Transverse colon (tissue), 4 donors: ENCODE measurements at regions of chr17 and their contacts with region 1.

Region 1: GRCh38 chr17:22233382-22233781 is 541.1 kb downstream of the KCNJ18 start:
- DNase-seq: no peak
- H3K4me3 ChIP-seq: no peak overlapping the region
- H3K27ac ChIP-seq: no peak overlapping the region
- H3K4me1 ChIP-seq: no peaks in the 10 kb centered on the region
- H3K27me3 ChIP-seq: no peaks in the 10 kb centered on the region
- CTCF ChIP-seq: no peak
- EP300 ChIP-seq: no peak
- POLR2A ChIP-seq: no peak

Region 2: GRCh38 chr17:22145605-22146178 is 87.7 kb before region 1 on chr17:
- in situ Hi-C with region 1: no loop called
- intact Hi-C with region 1: no loop called
- DNase-seq: no peak
- H3K4me3 ChIP-seq: no peak overlapping the region
- H3K27ac ChIP-seq: no peak overlapping the region
- H3K4me1 ChIP-seq: no peaks in the 10 kb centered on the region
- H3K27me3 ChIP-seq: no peaks in the 10 kb centered on the region
- CTCF ChIP-seq: no peak
- EP300 ChIP-seq: no peak
- POLR2A ChIP-seq: no peak

Region 3: DNA sequence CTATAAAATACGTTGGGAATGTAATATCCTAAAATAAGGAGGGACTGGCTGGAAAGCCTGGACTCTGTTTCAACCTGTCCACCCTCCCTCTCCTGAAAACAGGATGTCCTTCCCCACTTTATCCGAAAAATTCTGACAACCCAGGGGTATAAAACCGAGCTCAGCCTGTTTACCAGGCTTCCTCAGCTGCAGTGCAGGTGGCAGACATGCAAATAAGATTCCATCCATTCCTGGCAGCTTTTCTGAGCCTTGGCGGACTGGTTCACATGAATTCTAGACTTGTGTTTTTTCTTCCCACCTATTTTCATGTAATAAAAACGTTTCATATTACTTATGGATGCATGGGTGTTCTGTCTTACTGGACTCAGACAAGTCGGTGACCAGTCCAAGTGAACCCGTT is 61.8 kb before region 1 on chr17:
- in situ Hi-C with region 1: loop called in 1 of 4 experiments (anchors 10 kb)
- intact Hi-C with region 1: no loop called
- DNase-seq: no peak
- H3K4me3 ChIP-seq: no peak overlapping the region
- H3K27ac ChIP-seq: no peak overlapping the region
- H3K4me1 ChIP-seq: no peaks in the 10 kb centered on the region
- H3K27me3 ChIP-seq: no peaks in the 10 kb centered on the region
- CTCF ChIP-seq: no peak
- EP300 ChIP-seq: no peak
- POLR2A ChIP-seq: no peak

Region 4: DNA sequence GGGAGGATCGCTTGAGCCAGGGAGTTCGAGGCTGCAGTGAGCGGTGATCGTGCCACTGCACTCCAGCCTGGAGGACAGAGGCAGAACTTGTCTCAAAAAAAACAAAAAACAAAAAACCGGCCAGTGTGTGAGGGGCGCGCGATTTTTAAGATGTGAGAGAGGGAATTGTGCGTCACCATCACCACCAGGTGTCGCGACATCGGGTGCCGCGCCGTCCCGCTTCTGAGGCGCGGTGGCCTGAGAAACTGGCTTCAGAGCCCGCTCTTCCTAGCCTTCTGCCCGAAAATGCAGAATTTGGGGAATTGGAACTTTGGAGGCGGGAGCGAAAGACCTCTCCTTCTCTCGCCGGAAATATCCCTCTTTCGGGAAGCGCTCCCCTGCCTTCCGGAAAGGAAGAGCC is 16.2 kb before region 1 on chr17:
- in situ Hi-C with region 1: no loop called
- intact Hi-C with region 1: no loop called
- DNase-seq: no peak
- H3K4me3 ChIP-seq: no peak overlapping the region
- H3K27ac ChIP-seq: no peak overlapping the region
- H3K4me1 ChIP-seq: no peaks in the 10 kb centered on the region
- H3K27me3 ChIP-seq: no peaks in the 10 kb centered on the region
- CTCF ChIP-seq: no peak
- EP300 ChIP-seq: no peak
- POLR2A ChIP-seq: no peak

Region 5: GRCh38 chr17:22374741-22375140 is 141.4 kb after region 1 on chr17:
- in situ Hi-C with region 1: no loop called
- intact Hi-C with region 1: no loop called
- DNase-seq: no peak
- H3K4me3 ChIP-seq: no peak overlapping the region
- H3K27ac ChIP-seq: no peak overlapping the region
- H3K4me1 ChIP-seq: no peaks in the 10 kb centered on the region
- H3K27me3 ChIP-seq: no peaks in the 10 kb centered on the region
- CTCF ChIP-seq: no peak
- EP300 ChIP-seq: no peak
- POLR2A ChIP-seq: no peak